ENCODE measurements at regions of chr6 and their contacts with region 1.

Region 1: DNA sequence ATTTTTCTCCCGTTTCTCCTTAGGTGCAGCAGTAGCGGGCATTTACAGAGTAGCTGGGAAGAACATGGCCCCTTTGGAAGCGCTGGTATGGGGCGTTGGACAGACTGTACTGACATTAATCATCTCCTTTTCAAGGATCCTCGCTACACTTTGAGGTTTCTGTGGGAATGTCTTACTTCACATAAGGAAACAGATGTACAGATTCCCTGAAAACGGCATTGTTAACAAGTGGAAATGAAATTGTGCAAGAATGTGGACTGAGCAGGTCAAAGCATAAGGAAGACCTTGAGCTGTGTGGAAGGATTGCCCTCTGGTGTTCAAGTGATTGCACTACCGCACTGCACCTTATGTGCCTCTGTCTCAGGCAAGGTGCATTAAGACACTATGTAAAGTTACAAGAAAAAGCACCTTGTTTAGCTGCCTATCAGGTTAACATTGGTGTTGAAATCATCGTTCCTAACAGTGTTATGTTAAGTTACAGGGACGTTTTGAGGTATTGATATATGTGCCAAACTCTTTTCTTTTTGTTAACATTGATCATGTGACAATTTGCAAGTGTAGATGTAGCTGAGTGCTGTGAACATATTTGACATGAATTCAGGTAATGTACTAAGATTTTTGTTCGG is 38.0 kb downstream of the TMEM170B start:
- DNase-seq: peak; percentile 10 to 54 (median 42)
- ATAC-seq: peak; percentile 97
- H3K4me3 ChIP-seq: no peak overlapping the region
- H3K4me3 Mint-ChIP-seq: no peak overlapping the region
- H3K27ac ChIP-seq: no peak overlapping the region
- H3K27ac Mint-ChIP-seq: no peak overlapping the region
- H3K4me1 ChIP-seq: no peaks in the 10 kb centered on the region
- H3K4me1 Mint-ChIP-seq: peaks cover 0 to 4% (median 0%) of the 10 kb centered on the region in 7 donors
- H3K27me3 ChIP-seq: no peaks in the 10 kb centered on the region
- H3K27me3 Mint-ChIP-seq: no peaks in the 10 kb centered on the region

Region 2: DNA sequence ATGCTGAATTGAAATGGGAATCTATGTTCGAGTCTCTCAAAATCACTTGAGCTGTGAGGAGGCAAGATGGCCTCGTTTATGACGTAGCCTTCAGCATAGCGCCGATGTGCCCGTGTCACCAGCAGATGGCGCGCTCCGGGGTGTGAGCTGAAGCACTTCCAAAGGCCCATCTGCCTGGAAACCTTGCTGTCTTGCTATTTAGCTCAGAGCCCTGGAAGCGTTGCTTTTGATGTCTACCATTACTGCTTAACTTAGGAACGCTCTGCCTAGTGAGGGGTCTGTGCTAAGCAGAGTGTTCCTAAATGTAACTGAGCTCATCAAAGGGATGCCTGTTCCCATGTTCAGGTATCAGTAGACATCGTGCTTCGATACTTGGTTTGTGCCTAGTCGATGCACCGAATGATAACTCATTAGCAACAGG is 620.9 kb before region 1 on chr6:
- CTCF ChIA-PET with region 1: no interaction called
- POLR2A ChIA-PET with region 1: no interaction called
- intact Hi-C with region 1: loop called in 1 of 2 experiments (anchors 1 kb)
- DNase-seq: peak; percentile 2 to 71 (median 32)
- ATAC-seq: peak; percentile 69
- H3K4me3 ChIP-seq: no peak overlapping the region
- H3K4me3 Mint-ChIP-seq: no peak overlapping the region
- H3K27ac ChIP-seq: no peak overlapping the region
- H3K27ac Mint-ChIP-seq: peak overlapping the region in 1 of 9 donors; percentile 20
- H3K4me1 ChIP-seq: no peaks in the 10 kb centered on the region
- H3K4me1 Mint-ChIP-seq: no peaks in the 10 kb centered on the region
- H3K27me3 ChIP-seq: no peaks in the 10 kb centered on the region
- H3K27me3 Mint-ChIP-seq: peaks cover 13 to 31% (median 26%) of the 10 kb centered on the region in 5 donors

Region 3: GRCh38 chr6:11144393-11144851 is 431.1 kb before region 1 on chr6:
- CTCF ChIA-PET with region 1: interaction called, 5 read pairs
- POLR2A ChIA-PET with region 1: no interaction called
- intact Hi-C with region 1: loop called (anchors 1 kb)
- DNase-seq: peak; percentile 21 to 71 (median 54)
- ATAC-seq: peak; percentile 86
- H3K4me3 ChIP-seq: no peak overlapping the region
- H3K4me3 Mint-ChIP-seq: no peak overlapping the region
- H3K27ac ChIP-seq: no peak overlapping the region
- H3K27ac Mint-ChIP-seq: no peak overlapping the region
- H3K4me1 ChIP-seq: no peaks in the 10 kb centered on the region
- H3K4me1 Mint-ChIP-seq: peaks cover 0 to 7% (median 0%) of the 10 kb centered on the region in 7 donors
- H3K27me3 ChIP-seq: no peaks in the 10 kb centered on the region
- H3K27me3 Mint-ChIP-seq: peaks cover 0 to 5% (median 0%) of the 10 kb centered on the region in 5 donors

Region 4: GRCh38 chr6:11537229-11538051 is 38.1 kb before region 1 on chr6 and contains the start of gene TMEM170B:
- CTCF ChIA-PET with region 1: no interaction called
- POLR2A ChIA-PET with region 1: no interaction called
- intact Hi-C with region 1: loop called in 1 of 2 experiments (anchors 1 kb)
- DNase-seq: peak; percentile 94 to 99 (median 98)
- ATAC-seq: peak; percentile 95
- H3K4me3 ChIP-seq: peak within 1 kb of the TSS; percentile 62
- H3K4me3 Mint-ChIP-seq: peak within 1 kb of the TSS; percentile 82 to 90 (median 88)
- H3K27ac ChIP-seq: peak within 1 kb of the TSS; percentile 76
- H3K27ac Mint-ChIP-seq: peak within 1 kb of the TSS in 8 of 9 donors; percentile 67 to 93 (median 83)
- H3K4me1 ChIP-seq: peaks cover 4 to 5% of the 10 kb centered on the region in 2 donors
- H3K4me1 Mint-ChIP-seq: peaks cover 6 to 28% (median 19%) of the 10 kb centered on the region in 7 donors
- H3K27me3 ChIP-seq: no peaks in the 10 kb centered on the region
- H3K27me3 Mint-ChIP-seq: peaks cover 0 to 76% (median 7%) of the 10 kb centered on the region in 5 donors
- total RNA-seq, gene TMEM170B: 0.29 to 12.7 (median 3.4) TPM

Region 5: GRCh38 chr6:11618533-11618932 is 43.0 kb after region 1 on chr6:
- CTCF ChIA-PET with region 1: no interaction called
- POLR2A ChIA-PET with region 1: no interaction called
- intact Hi-C with region 1: no loop called
- DNase-seq: peak in 4 of 9 donors; percentile 2 to 13 (median 4)
- ATAC-seq: no peak
- H3K4me3 ChIP-seq: no peak overlapping the region
- H3K4me3 Mint-ChIP-seq: no peak overlapping the region
- H3K27ac ChIP-seq: no peak overlapping the region
- H3K27ac Mint-ChIP-seq: no peak overlapping the region
- H3K4me1 ChIP-seq: no peaks in the 10 kb centered on the region
- H3K4me1 Mint-ChIP-seq: no peaks in the 10 kb centered on the region
- H3K27me3 ChIP-seq: no peaks in the 10 kb centered on the region
- H3K27me3 Mint-ChIP-seq: no peaks in the 10 kb centered on the region